ENCODE measurements at regions of chr3 and their contacts with region 1.

Region 1: GRCh38 chr3:141738022-141738890 is at the start of gene RNF7:
- DNase-seq: peak; percentile 95 to 99 (median 97)
- ATAC-seq: peak; percentile 94
- H3K4me3 ChIP-seq: peak within 1 kb of the TSS; percentile 82 to 95
- H3K4me3 Mint-ChIP-seq: peak within 1 kb of the TSS; percentile 97
- H3K27ac ChIP-seq: peak within 1 kb of the TSS; percentile 82 to 90
- H3K27ac Mint-ChIP-seq: peak within 1 kb of the TSS; percentile 98
- H3K4me1 ChIP-seq: peaks cover 31% of the 10 kb centered on the region
- H3K4me1 Mint-ChIP-seq: peaks cover 36% of the 10 kb centered on the region
- H3K27me3 ChIP-seq: no peaks in the 10 kb centered on the region
- H3K27me3 Mint-ChIP-seq: no peaks in the 10 kb centered on the region
- CTCF ChIP-seq: peak; percentile 70
- total RNA-seq, gene RNF7: 82.8 to 83.9 TPM

Region 2: DNA sequence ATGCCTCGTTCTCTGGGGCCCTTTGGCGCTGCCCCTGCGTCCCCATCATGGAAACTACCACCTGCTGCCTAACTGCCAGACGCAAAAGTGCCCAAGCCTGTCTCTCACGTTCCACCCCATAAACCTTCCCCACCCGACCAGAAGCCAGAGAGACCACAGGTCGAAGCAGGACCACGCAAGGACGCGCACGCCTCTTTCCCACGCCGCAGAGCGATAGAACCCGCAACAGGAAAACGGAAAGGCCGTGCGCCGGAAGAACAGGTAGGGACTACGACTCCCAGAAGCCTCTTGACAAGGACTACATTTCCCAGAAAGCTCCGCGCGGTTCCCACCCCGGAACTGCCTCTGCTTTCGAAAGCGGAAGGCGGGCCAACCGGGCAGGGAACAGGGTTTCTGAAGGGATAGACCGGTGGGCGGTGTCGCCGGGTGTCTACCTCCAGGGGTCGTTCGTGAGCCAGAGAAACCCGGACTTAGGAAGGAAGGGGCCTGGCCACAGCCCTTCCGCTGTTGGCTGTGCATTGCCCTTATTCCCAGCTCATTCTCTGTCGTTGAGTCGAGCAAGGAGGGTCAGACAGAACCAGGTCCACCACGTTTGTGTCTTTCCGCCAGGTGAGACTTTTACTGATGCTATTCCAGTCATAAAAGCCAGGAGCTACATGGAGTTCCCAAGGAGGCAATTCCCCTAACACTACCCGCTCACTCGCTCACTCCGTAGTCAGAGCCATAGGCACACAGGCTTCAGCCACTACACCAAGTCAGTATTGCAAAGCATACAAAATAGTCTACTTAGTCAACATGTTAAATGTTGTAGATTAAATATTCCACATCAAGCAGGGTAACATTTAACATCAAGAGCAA is 426.5 kb before region 1 on chr3:
- CTCF ChIA-PET with region 1: no interaction called
- POLR2A ChIA-PET with region 1: no interaction called
- intact Hi-C with region 1: loop called (anchors 1 to 5 kb)
- DNase-seq: peak; percentile 93 to 98 (median 98)
- ATAC-seq: peak; percentile 93
- H3K4me3 ChIP-seq: peak overlapping the region; percentile 82 to 87
- H3K4me3 Mint-ChIP-seq: peak overlapping the region; percentile 93
- H3K27ac ChIP-seq: peak overlapping the region; percentile 61 to 84
- H3K27ac Mint-ChIP-seq: peak overlapping the region; percentile 96
- H3K4me1 ChIP-seq: peaks cover 43% of the 10 kb centered on the region
- H3K4me1 Mint-ChIP-seq: peaks cover 53% of the 10 kb centered on the region
- H3K27me3 ChIP-seq: no peaks in the 10 kb centered on the region
- H3K27me3 Mint-ChIP-seq: no peaks in the 10 kb centered on the region
- CTCF ChIP-seq: peak; percentile 60

Region 3: DNA sequence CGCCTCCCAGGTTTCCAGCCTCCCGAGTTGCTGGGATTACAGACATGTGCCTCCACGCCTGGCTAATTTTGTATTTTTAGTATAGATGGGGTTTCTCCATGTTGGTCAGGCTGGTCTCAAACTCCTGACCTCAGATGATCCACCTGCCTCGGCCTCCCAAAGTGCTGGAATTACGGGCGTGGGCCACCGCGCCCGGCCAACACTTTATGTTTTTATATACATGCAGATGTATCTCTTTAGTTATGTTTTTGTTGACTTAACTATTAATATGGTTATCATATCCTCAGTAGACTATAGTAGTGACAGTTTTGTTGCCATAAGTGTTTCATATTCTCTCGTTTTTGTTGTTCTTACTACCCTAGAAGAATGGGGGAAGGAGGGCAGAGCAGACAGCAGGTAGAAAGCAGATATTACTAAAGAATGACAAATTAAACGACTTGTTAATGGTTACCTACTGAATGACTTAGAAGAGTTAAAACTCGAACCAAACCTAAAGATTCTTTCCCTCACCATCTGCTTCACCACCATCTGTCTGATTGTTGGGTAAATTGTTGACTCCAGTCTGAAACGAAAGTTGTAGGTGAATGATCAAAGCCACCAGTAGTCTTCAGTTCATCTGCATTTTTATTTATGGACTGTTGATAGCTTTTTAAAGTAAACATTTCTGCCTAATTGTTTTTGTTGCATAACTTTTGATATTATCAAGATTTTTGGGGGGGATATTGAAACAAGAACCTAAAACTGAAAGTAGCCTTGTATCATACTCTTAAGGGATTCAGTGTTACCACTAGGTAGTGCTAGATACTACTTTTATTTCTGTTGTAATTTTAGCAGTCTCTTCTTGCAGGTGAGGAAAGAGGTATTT is 162.1 kb before region 1 on chr3:
- CTCF ChIA-PET with region 1: no interaction called
- POLR2A ChIA-PET with region 1: no interaction called
- intact Hi-C with region 1: loop called (anchors 5 to 10 kb)
- DNase-seq: peak in 2 of 9 experiments; percentile 19 to 54
- ATAC-seq: peak; percentile 75
- H3K4me3 ChIP-seq: no peak overlapping the region
- H3K4me3 Mint-ChIP-seq: peak overlapping the region; percentile 64
- H3K27ac ChIP-seq: peak overlapping the region in 1 of 2 experiments; percentile 52
- H3K27ac Mint-ChIP-seq: peak overlapping the region; percentile 86
- H3K4me1 ChIP-seq: peaks cover 6% of the 10 kb centered on the region
- H3K4me1 Mint-ChIP-seq: peaks cover 11% of the 10 kb centered on the region
- H3K27me3 ChIP-seq: no peaks in the 10 kb centered on the region
- H3K27me3 Mint-ChIP-seq: no peaks in the 10 kb centered on the region
- CTCF ChIP-seq: peak; percentile 62

Region 4: GRCh38 chr3:141875374-141875892 is 137.2 kb after region 1 on chr3:
- CTCF ChIA-PET with region 1: interaction called, 30 read pairs
- POLR2A ChIA-PET with region 1: interaction called, 40 read pairs
- intact Hi-C with region 1: loop called (anchors 1 kb)
- DNase-seq: peak; percentile 67 to 92 (median 84)
- ATAC-seq: peak; percentile 67
- H3K4me3 ChIP-seq: peak overlapping the region; percentile 71 to 88
- H3K4me3 Mint-ChIP-seq: peak overlapping the region; percentile 88
- H3K27ac ChIP-seq: peak overlapping the region; percentile 76 to 99
- H3K27ac Mint-ChIP-seq: peak overlapping the region; percentile 90
- H3K4me1 ChIP-seq: peaks cover 17% of the 10 kb centered on the region
- H3K4me1 Mint-ChIP-seq: peaks cover 29% of the 10 kb centered on the region
- H3K27me3 ChIP-seq: no peaks in the 10 kb centered on the region
- H3K27me3 Mint-ChIP-seq: no peaks in the 10 kb centered on the region
- CTCF ChIP-seq: peak; percentile 82

Region 5: DNA sequence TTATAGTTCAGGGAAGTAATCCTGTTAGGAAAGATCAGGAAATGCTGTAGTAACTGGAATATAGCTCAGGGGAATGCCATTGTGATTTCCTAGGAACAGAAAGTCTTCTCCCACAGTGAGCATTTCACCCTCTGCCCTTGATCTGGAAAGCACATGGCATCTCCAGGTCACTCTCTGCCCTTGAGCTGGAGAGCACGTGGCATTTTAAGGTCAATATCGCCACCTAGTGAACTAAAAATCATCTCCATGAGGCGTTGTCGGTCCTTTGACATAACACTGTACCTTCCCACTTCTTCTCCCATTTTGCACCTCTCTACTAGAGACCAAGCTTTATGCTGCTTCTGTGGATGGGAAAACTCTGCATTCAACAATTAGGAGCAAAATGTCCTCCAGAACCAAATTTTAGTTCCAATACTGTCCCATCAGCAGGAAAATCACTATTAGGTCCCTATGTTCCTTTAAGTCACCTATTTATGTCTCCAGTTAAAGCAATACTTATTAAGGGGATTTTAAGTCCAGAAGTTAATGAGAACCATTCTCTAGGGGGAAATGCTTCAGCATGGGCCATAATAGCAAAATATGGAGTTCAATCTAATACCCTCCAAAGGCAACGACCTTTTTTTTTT is 541.8 kb after region 1 on chr3:
- CTCF ChIA-PET with region 1: no interaction called
- POLR2A ChIA-PET with region 1: no interaction called
- intact Hi-C with region 1: loop called (anchors 5 kb)
- DNase-seq: peak in 7 of 9 experiments; percentile 15 to 82 (median 38)
- ATAC-seq: peak; percentile 74
- H3K4me3 ChIP-seq: no peak overlapping the region
- H3K4me3 Mint-ChIP-seq: no peak overlapping the region
- H3K27ac ChIP-seq: no peak overlapping the region
- H3K27ac Mint-ChIP-seq: no peak overlapping the region
- H3K4me1 ChIP-seq: no peaks in the 10 kb centered on the region
- H3K4me1 Mint-ChIP-seq: peaks cover 11% of the 10 kb centered on the region
- H3K27me3 ChIP-seq: no peaks in the 10 kb centered on the region
- H3K27me3 Mint-ChIP-seq: peaks cover 5% of the 10 kb centered on the region
- CTCF ChIP-seq: peak; percentile 70

Region 6: DNA sequence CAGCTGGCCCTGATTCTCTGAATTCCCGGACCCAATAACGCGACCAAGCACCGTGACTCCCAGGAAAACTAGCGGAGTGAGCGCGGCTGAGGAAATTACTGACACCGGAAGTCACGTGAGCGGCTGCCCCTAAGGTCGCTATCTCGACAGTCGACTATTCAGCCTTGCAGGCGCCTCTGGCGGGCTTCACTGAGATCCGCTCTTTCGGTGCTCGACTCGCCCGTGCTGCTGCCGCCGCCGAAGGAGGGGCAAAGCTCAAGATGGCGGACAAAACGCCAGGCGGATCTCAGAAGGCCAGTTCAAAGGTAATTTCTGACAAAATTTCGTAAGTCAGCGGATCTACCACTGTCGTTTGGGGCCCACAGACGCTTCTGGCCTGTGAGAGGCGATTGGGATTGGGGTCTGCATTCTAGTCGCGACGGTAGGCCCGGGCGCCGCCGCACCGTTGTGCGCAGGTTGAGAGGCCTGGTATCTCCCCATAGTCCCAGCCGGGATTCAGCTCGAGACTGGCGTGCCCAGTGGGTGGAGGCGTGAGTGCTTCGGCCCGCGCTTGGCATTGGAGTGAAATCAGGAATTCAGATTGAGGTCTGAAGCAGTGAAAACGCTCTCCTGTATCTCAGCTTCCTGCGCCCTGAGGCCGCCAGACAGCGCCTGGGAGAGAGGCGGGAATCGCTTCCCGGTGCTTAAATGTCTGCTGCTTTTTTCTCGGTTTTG is 1263.3 kb after region 1 on chr3 and contains the start of gene U2SURP:
- CTCF ChIA-PET with region 1: no interaction called
- POLR2A ChIA-PET with region 1: no interaction called
- intact Hi-C with region 1: loop called in 1 of 2 experiments (anchors 5 kb)
- DNase-seq: peak; percentile 82 to 97 (median 90)
- ATAC-seq: peak; percentile 93
- H3K4me3 ChIP-seq: peak within 1 kb of the TSS; percentile 81 to 92
- H3K4me3 Mint-ChIP-seq: peak within 1 kb of the TSS; percentile 99
- H3K27ac ChIP-seq: peak within 1 kb of the TSS; percentile 91 to 92
- H3K27ac Mint-ChIP-seq: peak within 1 kb of the TSS; percentile 99
- H3K4me1 ChIP-seq: peaks cover 34% of the 10 kb centered on the region
- H3K4me1 Mint-ChIP-seq: peaks cover 42% of the 10 kb centered on the region
- H3K27me3 ChIP-seq: no peaks in the 10 kb centered on the region
- H3K27me3 Mint-ChIP-seq: no peaks in the 10 kb centered on the region
- CTCF ChIP-seq: no peak
- total RNA-seq, gene U2SURP: 186 TPM

Measured in CD8-positive, alpha-beta T cell (primary cell).